ENCODE measurements at regions of chr2 and their contacts with region 1.

Region 1: GRCh38 chr2:212147921-212148513 is 390.6 kb downstream of the ERBB4 start:
- DNase-seq: no peak
- ATAC-seq: no peak
- H3K4me3 ChIP-seq: no peak overlapping the region
- H3K27ac ChIP-seq: no peak overlapping the region
- H3K4me1 ChIP-seq: no peaks in the 10 kb centered on the region
- H3K27me3 ChIP-seq: no peaks in the 10 kb centered on the region
- CTCF ChIP-seq: peak; percentile 35 to 54 (median 49); a peak in 4 of 6 replicates
- POLR2A ChIP-seq: no peak
- RAD21 ChIP-seq: peak; percentile 53

Region 2: DNA sequence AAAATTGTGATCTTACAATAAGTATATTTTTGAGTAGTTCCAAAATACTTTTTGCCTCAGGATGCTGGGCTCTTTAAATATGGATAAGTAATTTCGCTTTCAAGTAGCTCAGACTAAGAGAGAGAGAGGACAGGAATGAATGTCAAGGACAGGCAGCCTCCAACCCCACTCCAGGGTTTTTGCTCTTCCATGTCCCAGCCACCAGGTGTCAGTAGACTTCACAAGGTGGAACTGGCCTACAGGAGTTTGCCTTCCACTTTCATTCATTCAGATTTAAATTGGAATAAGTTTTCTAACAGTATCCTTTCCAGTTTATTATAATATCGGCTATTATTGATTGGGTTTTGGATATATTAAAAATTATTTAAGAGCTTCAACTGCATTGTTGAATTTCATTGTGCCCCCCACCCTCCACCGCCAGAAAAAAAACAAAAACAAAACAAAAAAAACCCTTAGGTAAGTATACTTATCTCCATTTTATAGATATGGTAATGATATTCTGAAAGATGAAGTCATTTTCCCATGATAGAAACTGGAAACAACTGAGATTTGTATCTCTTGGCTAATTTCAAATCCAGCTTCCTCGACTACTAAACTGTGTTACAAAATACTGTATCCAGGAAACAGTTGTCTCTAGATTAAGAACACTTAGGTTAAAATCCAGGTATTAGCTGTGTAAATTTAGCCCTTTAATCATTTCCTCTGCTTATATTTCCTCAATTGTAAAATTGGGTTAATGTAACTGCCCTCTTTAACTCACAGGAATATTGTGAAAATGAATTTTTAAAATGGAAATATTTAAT is 402.5 kb before region 1 on chr2:
- CTCF ChIA-PET with region 1: no interaction called
- POLR2A ChIA-PET with region 1: no interaction called
- RAD21 ChIA-PET with region 1: no interaction called
- intact Hi-C with region 1: loop called (anchors 10 kb)
- DNase-seq: peak; percentile 51
- ATAC-seq: peak; percentile 95
- H3K4me3 ChIP-seq: no peak overlapping the region
- H3K27ac ChIP-seq: no peak overlapping the region
- H3K4me1 ChIP-seq: no peaks in the 10 kb centered on the region
- H3K27me3 ChIP-seq: no peaks in the 10 kb centered on the region
- CTCF ChIP-seq: peak; percentile 70 to 90 (median 88)
- POLR2A ChIP-seq: no peak
- RAD21 ChIP-seq: peak; percentile 85

Region 3: GRCh38 chr2:212249451-212249850 is 101.4 kb after region 1 on chr2:
- CTCF ChIA-PET with region 1: interaction called, 4 read pairs
- POLR2A ChIA-PET with region 1: no interaction called
- RAD21 ChIA-PET with region 1: no interaction called
- intact Hi-C with region 1: loop called (anchors 5 kb)
- DNase-seq: no peak
- ATAC-seq: no peak
- H3K4me3 ChIP-seq: no peak overlapping the region
- H3K27ac ChIP-seq: no peak overlapping the region
- H3K4me1 ChIP-seq: no peaks in the 10 kb centered on the region
- H3K27me3 ChIP-seq: no peaks in the 10 kb centered on the region
- CTCF ChIP-seq: peak; percentile 35 to 54 (median 48); a peak in 5 of 6 replicates
- POLR2A ChIP-seq: no peak
- RAD21 ChIP-seq: peak; percentile 61

Region 4: DNA sequence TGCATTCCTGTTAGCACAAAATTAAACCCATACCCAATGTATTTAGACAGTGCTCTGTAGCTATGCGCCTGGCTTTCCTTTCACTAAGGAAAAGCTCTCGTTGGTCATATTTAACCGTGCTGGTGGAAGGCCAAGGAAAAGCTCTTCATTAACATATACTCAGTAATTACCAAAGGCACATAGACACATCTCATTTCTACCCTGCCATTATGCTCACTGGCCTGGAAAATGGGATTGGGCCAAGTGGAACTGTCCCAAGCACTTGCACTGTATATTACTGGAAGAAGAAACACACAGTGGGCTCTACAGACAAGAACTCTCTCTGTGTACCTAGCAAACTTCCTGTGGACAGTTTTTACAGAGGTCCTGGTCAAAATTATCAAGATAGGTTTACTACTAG is 116.2 kb after region 1 on chr2:
- CTCF ChIA-PET with region 1: no interaction called
- POLR2A ChIA-PET with region 1: no interaction called
- RAD21 ChIA-PET with region 1: no interaction called
- intact Hi-C with region 1: no loop called
- DNase-seq: no peak
- ATAC-seq: no peak
- H3K4me3 ChIP-seq: no peak overlapping the region
- H3K27ac ChIP-seq: no peak overlapping the region
- H3K4me1 ChIP-seq: no peaks in the 10 kb centered on the region
- H3K27me3 ChIP-seq: no peaks in the 10 kb centered on the region
- CTCF ChIP-seq: no peak
- POLR2A ChIP-seq: no peak
- RAD21 ChIP-seq: no peak

Region 5: GRCh38 chr2:212520340-212520739 is 372.3 kb after region 1 on chr2:
- CTCF ChIA-PET with region 1: interaction called, 7 read pairs
- POLR2A ChIA-PET with region 1: no interaction called
- RAD21 ChIA-PET with region 1: no interaction called
- intact Hi-C with region 1: loop called (anchors 5 kb)
- DNase-seq: peak; percentile 7
- ATAC-seq: peak; percentile 76
- H3K4me3 ChIP-seq: no peak overlapping the region
- H3K27ac ChIP-seq: no peak overlapping the region
- H3K4me1 ChIP-seq: no peaks in the 10 kb centered on the region
- H3K27me3 ChIP-seq: no peaks in the 10 kb centered on the region
- CTCF ChIP-seq: peak; percentile 28 to 45 (median 40); a peak in 4 of 6 replicates
- POLR2A ChIP-seq: no peak
- RAD21 ChIP-seq: peak; percentile 68

Measured in HCT116 (cell line).